Activated CD4-positive, alpha-beta T cell treated with anti-CD3 and anti-CD28 coated beads for 36 hours (primary cell): ENCODE measurements at regions of chr2 and their contacts with region 1.

Region 1: GRCh38 chr2:25851740-25852503 is 26.4 kb downstream of the ASXL2 start:
- DNase-seq: peak; percentile 38
- ATAC-seq: peak; percentile 90
- H3K4me3 Mint-ChIP-seq: peak overlapping the region; percentile 64
- H3K27ac Mint-ChIP-seq: peak overlapping the region; percentile 86
- H3K4me1 Mint-ChIP-seq: peaks cover 44% of the 10 kb centered on the region
- H3K27me3 Mint-ChIP-seq: no peaks in the 10 kb centered on the region

Region 2: GRCh38 chr2:25794544-25795276 is 57.2 kb before region 1 on chr2:
- CTCF ChIA-PET with region 1: interaction called, 7 read pairs
- POLR2A ChIA-PET with region 1: interaction called, 3 read pairs
- intact Hi-C with region 1: loop called (anchors 2 to 5 kb)
- DNase-seq: peak; percentile 22
- ATAC-seq: peak; percentile 60
- H3K4me3 Mint-ChIP-seq: peak overlapping the region; percentile 60
- H3K27ac Mint-ChIP-seq: peak overlapping the region; percentile 84
- H3K4me1 Mint-ChIP-seq: peaks cover 83% of the 10 kb centered on the region
- H3K27me3 Mint-ChIP-seq: no peaks in the 10 kb centered on the region

Region 3: DNA sequence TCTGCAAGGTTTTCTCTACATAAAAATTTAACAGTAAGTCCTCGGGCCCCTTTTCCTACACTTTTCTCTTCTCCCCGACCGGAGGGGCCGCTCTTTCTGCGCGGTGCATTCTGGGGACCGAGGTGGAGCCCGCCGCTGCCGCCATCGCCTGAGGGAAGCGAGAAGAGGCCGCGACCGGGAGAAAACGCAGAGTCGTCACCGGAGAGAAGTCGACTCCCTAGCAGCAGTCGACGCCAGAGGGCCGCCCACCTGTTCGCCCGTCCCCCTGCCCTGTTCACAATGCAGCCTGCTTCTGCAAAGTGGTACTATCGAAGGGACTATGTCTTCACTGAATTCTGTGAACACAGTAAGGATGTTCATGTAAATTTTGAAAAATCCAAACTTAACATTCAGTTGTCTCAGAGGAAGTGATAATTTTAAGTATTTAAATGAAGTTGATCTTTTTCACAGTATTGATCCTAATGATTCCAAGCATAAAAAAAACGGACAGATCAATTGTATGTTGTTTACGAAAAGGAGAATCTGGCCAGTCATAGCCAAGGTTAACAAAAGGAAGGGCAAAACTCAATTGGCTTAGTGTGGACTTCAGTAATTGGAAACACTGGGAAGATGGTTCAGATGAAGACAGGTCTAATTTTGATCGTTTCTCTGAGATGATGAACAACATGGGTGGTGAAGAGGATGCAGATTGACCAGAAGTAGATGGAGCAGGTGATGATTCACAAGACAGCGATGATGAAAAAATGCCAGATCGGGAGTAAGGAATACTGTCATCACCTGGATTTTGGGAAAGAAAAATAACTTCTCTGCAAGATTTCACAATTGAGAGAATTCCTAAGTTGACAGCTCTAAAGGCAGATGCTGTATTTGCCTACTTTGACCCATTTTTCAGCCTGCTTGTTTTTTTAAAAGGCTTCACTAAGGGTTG is 29.5 kb before region 1 on chr2:
- CTCF ChIA-PET with region 1: interaction called, 15 read pairs
- POLR2A ChIA-PET with region 1: interaction called, 7 read pairs
- intact Hi-C with region 1: loop called (anchors 1 kb)
- DNase-seq: peak; percentile 82
- ATAC-seq: peak; percentile 34
- H3K4me3 Mint-ChIP-seq: peak overlapping the region; percentile 72
- H3K27ac Mint-ChIP-seq: peak overlapping the region; percentile 79
- H3K4me1 Mint-ChIP-seq: peaks cover 69% of the 10 kb centered on the region
- H3K27me3 Mint-ChIP-seq: no peaks in the 10 kb centered on the region

Region 4: GRCh38 chr2:25833566-25833965 is 18.4 kb before region 1 on chr2:
- CTCF ChIA-PET with region 1: interaction called, 6 read pairs
- POLR2A ChIA-PET with region 1: interaction called, 7 read pairs
- intact Hi-C with region 1: loop called (anchors 1 to 2 kb)
- DNase-seq: peak; percentile 40
- ATAC-seq: no peak
- H3K4me3 Mint-ChIP-seq: no peak overlapping the region
- H3K27ac Mint-ChIP-seq: peak overlapping the region; percentile 26
- H3K4me1 Mint-ChIP-seq: peaks cover 57% of the 10 kb centered on the region
- H3K27me3 Mint-ChIP-seq: no peaks in the 10 kb centered on the region

Region 5: GRCh38 chr2:25912851-25913695 is 61.2 kb after region 1 on chr2:
- CTCF ChIA-PET with region 1: interaction called, 5 read pairs
- POLR2A ChIA-PET with region 1: no interaction called
- intact Hi-C with region 1: loop called in 1 of 2 experiments (anchors 10 kb)
- DNase-seq: no peak
- ATAC-seq: no peak
- H3K4me3 Mint-ChIP-seq: no peak overlapping the region
- H3K27ac Mint-ChIP-seq: no peak overlapping the region
- H3K4me1 Mint-ChIP-seq: peaks cover 21% of the 10 kb centered on the region
- H3K27me3 Mint-ChIP-seq: peaks cover 2% of the 10 kb centered on the region

Region 6: DNA sequence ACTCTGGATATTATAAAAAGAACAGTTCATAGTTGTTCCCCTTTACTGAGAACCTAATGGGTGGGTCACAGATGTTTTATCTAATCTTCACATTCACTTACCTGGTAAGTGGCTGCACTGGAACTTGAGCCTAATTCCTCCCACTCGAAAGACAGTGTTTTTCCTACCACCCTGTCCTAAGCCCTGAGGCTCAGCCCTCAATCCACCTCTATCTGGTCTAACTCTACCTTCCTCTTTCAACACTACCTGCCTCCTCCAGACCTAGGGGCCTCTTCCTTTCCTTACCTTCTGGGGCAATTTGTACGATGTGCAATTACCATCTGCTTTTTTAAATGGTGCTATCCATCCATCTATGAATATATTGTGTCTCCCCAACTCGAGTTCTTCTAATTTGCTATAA is 140.0 kb after region 1 on chr2:
- CTCF ChIA-PET with region 1: interaction called, 13 read pairs
- POLR2A ChIA-PET with region 1: no interaction called
- intact Hi-C with region 1: loop called in 1 of 2 experiments (anchors 1 kb)
- DNase-seq: no peak
- ATAC-seq: peak; percentile 33
- H3K4me3 Mint-ChIP-seq: no peak overlapping the region
- H3K27ac Mint-ChIP-seq: no peak overlapping the region
- H3K4me1 Mint-ChIP-seq: peaks cover 8% of the 10 kb centered on the region
- H3K27me3 Mint-ChIP-seq: no peaks in the 10 kb centered on the region

Region 7: DNA sequence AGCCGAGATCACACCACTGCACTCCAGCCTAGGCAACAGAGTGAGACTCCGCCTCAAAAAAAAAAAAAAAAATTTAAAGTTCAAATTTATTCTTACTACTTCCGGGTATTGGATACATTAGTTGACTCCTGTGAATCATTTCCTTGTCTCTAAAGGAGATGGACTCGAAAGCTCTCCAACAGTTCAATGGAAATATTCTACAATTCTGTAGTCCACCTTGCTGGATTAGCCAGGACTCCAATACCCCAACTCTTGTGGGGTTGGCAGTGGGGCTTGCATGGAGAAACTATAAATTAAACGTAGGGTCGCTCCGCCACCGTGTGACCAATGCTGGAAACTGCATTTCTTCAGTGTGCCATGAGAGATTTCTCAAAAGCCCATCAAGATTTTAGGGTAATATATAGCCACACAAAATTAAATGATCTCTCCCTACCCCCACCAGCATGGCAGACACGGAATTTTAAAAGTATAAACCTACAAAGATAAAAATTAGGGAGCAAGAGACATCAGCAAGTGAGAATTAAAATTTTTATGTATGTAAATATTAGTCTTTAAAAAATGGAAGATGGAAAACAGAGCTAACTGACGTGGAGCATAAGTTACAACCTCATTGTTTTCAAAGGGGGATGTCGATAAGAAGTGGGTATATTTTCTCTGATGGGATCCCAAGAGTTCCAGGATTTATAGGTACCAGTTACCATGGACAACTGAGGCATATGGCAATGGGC is 293.2 kb after region 1 on chr2:
- CTCF ChIA-PET with region 1: interaction called, 4 read pairs
- POLR2A ChIA-PET with region 1: no interaction called
- intact Hi-C with region 1: loop called (anchors 1 to 5 kb)
- DNase-seq: peak; percentile 80
- ATAC-seq: peak; percentile 76
- H3K4me3 Mint-ChIP-seq: no peak overlapping the region
- H3K27ac Mint-ChIP-seq: no peak overlapping the region
- H3K4me1 Mint-ChIP-seq: no peaks in the 10 kb centered on the region
- H3K27me3 Mint-ChIP-seq: peaks cover 10% of the 10 kb centered on the region

Region 8: DNA sequence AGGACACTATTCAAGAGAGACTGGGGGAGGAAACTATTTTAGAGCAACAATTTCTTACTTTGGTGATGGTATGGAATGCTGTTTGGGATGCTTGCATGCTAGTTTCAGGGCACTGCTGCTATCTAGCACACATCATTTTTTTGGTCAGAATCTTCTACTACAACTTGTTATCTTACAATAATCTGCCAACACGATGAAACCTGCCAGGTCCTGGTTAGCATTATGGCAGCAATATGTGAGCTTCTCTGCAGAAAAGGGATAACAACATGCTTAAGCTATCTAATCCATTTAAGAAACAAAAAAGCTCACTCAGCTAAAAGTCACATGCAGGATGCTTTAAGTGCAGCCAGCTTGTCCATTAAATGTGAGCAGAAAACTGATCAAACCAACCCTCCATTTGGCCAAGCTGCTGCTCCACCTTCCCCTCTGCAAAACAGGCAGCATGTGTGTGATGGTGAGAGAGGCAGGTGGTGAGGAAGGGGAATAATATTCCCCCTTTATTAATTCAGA is 351.1 kb after region 1 on chr2:
- CTCF ChIA-PET with region 1: no interaction called
- POLR2A ChIA-PET with region 1: no interaction called
- intact Hi-C with region 1: no loop called
- DNase-seq: no peak
- ATAC-seq: no peak
- H3K4me3 Mint-ChIP-seq: no peak overlapping the region
- H3K27ac Mint-ChIP-seq: no peak overlapping the region
- H3K4me1 Mint-ChIP-seq: no peaks in the 10 kb centered on the region
- H3K27me3 Mint-ChIP-seq: no peaks in the 10 kb centered on the region